ENCODE measurements at regions of chr2 and their contacts with region 1.

Region 1: GRCh38 chr2:189096769-189097447 is 82.7 kb downstream of the COL5A2 start:
- DNase-seq: no peak
- H3K4me3 Mint-ChIP-seq: no peak overlapping the region
- H3K27ac Mint-ChIP-seq: no peak overlapping the region
- H3K4me1 Mint-ChIP-seq: no peaks in the 10 kb centered on the region
- H3K27me3 Mint-ChIP-seq: no peaks in the 10 kb centered on the region

Region 2: DNA sequence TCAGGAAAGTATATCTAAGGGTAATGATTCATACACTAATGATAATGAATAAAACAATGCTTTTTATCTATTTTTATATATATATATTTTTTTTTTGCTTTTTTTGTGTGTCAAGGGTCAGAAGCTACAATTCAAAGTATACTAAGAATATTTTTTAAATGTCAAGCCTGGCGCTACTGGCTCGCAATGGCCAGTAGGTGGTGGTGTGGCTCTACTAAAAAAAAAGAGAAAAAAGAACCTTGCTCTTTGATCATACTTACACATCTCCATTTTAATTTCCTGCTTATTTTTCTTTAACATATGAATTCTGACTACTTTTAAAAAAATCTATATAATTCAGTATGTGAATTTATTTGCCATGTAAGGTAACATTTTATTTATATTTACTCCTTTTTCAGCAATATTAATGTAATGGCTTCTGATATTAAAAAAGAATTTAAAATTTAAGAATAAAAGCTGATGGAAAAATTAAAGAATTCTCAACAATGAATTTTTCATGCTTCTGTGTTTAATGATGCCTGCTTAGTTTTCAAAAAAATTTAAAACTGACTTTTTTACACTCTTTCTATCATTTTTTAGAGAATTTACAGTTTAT is 572.3 kb before region 1 on chr2:
- intact Hi-C with region 1: loop called (anchors 10 kb)
- DNase-seq: peak; percentile 67
- H3K4me3 Mint-ChIP-seq: no peak overlapping the region
- H3K27ac Mint-ChIP-seq: no peak overlapping the region
- H3K4me1 Mint-ChIP-seq: no peaks in the 10 kb centered on the region
- H3K27me3 Mint-ChIP-seq: peaks cover 2% of the 10 kb centered on the region

Region 3: DNA sequence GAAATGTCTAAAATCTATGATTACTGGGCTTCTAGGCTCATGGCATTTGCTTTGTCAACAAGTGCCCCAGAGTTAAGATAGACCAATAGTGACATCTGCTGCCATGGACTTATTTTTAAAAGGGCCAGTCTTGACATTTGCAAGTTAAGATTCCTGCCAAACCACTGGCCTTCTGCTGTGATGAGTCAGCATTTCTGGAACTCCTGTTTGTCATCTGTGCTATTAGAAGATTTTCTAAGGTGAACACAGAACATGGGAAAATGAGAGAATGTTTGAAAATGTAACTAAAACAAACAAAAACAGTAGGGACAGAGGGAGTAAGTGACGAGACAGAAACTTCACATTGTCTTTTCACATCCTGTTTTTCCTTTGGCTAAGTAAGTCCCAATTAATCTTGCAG is 250.6 kb after region 1 on chr2:
- intact Hi-C with region 1: loop called (anchors 1 kb)
- DNase-seq: peak; percentile 67
- H3K4me3 Mint-ChIP-seq: no peak overlapping the region
- H3K27ac Mint-ChIP-seq: no peak overlapping the region
- H3K4me1 Mint-ChIP-seq: peaks cover 4% of the 10 kb centered on the region
- H3K27me3 Mint-ChIP-seq: no peaks in the 10 kb centered on the region

Region 4: DNA sequence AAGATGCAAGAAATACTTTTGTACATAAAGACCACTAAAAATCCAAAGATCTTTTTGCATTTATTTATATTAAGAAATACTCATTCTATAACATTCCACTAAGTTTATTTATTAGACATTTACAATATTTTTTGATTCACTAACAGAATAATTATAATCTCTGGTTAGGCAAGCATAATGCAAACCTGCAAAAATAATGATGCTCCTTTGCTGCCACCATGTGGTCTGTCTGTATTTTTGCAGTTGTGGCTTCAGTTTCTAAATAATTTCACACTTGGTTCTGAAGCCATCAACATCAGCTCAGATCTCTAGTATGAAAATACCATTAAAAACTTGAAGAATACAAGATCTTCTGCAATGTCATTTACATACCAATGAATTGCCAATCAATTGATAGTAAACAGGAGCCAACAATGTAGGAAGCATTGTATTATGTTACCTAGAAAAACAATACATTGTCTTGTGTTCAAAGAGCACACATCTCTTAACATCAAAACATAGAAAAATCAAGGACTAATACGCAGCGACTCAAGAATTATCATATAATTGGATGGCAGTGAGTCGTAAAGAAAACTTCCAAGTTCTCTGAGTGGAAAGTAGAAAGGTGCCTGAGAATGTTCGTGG is 315.5 kb after region 1 on chr2:
- intact Hi-C with region 1: loop called (anchors 1 kb)
- DNase-seq: peak; percentile 84
- H3K4me3 Mint-ChIP-seq: no peak overlapping the region
- H3K27ac Mint-ChIP-seq: no peak overlapping the region
- H3K4me1 Mint-ChIP-seq: peaks cover 6% of the 10 kb centered on the region
- H3K27me3 Mint-ChIP-seq: no peaks in the 10 kb centered on the region